Heart right ventricle (tissue), 16 donors: ENCODE measurements at regions of chr22 and their contacts with region 1.

Region 1: GRCh38 chr22:39532215-39533071 is at the start of gene RPS19BP1:
- DNase-seq: peak; percentile 98 to 99
- ATAC-seq: peak; percentile 85 to 93 (median 90)
- H3K4me3 ChIP-seq: peak within 1 kb of the TSS; percentile 67 to 88 (median 74)
- H3K27ac ChIP-seq: peak within 1 kb of the TSS; percentile 88 to 98 (median 92)
- H3K4me1 ChIP-seq: peaks cover 25 to 62% (median 47%) of the 10 kb centered on the region in 9 donors
- H3K27me3 ChIP-seq: no peaks in the 10 kb centered on the region
- CTCF ChIP-seq: no peak
- total RNA-seq, gene RPS19BP1: 31.3 to 64.0 (median 37.2) TPM

Region 2: DNA sequence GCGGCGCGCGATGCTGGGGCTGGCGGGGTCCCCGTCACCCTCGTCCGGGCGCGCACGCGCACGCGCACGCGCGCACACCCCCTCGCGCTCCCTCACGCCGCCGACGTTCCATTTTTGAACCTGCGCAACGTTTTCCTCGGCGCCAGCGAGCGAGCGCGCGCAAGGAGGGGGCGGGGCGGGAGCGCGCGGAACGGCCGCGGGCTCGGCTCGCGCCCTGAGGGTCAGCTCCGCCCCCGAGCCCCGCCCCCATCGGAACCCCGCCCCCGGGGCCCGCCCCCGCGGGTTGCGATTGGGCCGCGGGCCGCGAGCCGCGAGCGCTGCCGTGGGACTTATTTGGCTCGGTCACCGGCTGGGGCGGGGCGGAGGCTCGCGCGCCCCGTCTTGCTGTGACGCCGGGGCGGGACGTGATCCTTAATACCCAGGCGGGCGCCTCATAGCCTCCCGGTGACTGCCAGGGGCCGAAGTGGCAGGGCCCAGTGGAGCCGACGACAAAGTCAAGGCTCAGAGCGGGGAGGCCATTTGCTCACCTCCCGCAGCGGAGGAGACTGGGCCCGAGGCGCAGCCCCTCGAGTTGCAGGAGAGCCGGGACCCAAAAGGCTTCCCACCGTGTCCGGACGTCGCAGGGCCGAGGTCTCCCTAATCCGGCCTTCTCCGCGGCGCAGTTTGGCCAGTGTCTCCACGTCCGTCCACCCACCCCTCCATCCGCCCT is 379.8 kb before region 1 on chr22 and contains the start of gene CBX7:
- intact Hi-C with region 1: loop called in 1 of 10 experiments (anchors 5 kb)
- DNase-seq: peak; percentile 95 to 96
- ATAC-seq: peak; percentile 90 to 93 (median 92)
- H3K4me3 ChIP-seq: peak within 1 kb of the TSS; percentile 87 to 99 (median 94)
- H3K27ac ChIP-seq: peak within 1 kb of the TSS; percentile 83 to 97 (median 95)
- H3K4me1 ChIP-seq: peaks cover 7 to 56% (median 47%) of the 10 kb centered on the region in 9 donors
- H3K27me3 ChIP-seq: peaks cover 0 to 18% (median 0%) of the 10 kb centered on the region in 7 donors
- CTCF ChIP-seq: no peak
- total RNA-seq, gene CBX7: 48.8 to 85.8 (median 76.3) TPM

Region 3: DNA sequence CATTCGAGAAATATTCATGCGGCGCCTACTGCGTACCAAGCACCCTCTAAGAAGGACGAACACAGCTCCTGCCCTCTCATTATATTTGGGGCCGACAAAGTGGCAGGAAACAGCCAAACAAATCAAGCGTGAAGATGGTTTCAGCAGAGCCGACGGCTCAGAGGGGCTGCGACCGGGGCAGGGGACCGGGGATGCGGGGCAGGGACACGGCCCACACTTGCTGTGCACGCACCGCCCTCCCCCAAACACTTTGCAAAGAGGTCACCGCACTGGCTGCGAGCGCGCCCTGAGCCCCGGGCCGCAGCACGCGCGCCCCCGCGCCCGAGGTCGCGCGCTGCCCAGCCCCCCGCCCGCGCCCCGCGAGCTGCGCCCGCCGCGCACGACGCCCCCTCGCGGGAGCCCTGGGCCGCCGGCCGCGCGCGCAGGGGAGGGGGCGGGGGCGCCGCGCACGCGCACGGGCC is 182.9 kb before region 1 on chr22:
- intact Hi-C with region 1: loop called in 5 of 10 experiments (anchors 5 to 10 kb)
- DNase-seq: peak; percentile 30 to 53
- ATAC-seq: peak; percentile 54 to 79 (median 73)
- H3K4me3 ChIP-seq: peak overlapping the region; percentile 60 to 96 (median 72)
- H3K27ac ChIP-seq: peak overlapping the region in 8 of 10 donors; percentile 56 to 88 (median 74)
- H3K4me1 ChIP-seq: peaks cover 0 to 32% (median 19%) of the 10 kb centered on the region in 9 donors
- H3K27me3 ChIP-seq: peaks cover 0 to 14% (median 0%) of the 10 kb centered on the region in 7 donors
- CTCF ChIP-seq: no peak

Region 4: DNA sequence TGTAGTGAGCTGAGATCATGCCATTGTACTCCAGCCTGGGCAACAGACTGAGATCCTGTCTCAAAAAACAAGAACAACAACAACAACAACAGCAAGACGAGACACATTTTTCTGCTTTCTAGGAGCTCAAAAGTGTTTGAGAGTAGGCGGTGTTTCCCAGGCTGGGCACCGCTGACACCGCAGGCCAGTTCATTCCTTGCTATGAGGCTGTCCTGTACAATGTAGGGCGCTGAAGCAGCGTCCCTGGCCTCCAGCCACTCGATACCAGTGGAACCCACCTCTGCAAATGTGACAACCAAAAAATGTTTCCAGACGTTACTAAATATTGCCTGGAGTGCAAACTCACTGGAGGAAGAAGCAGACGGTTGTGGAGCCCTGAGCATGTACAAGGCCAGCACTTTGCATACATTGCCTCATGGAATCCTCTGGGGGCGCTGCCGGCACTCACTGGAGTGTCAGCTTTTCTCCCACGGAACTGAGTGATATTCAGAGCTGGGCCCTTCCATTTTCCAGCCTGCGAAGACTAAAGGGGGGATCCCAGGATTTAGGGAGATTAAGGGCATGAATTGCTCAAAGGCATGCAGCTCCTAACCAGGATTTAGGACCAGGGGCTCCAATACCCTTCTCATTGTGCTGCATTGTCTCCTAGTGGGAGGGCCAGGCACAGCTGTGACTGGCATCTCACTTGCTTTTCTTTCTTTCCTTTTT is 36.2 kb before region 1 on chr22:
- intact Hi-C with region 1: loop called in 8 of 10 experiments (anchors 1 to 5 kb)
- DNase-seq: peak; percentile 71 to 86
- ATAC-seq: peak; percentile 46 to 80 (median 68)
- H3K4me3 ChIP-seq: no peak overlapping the region
- H3K27ac ChIP-seq: peak overlapping the region in 7 of 10 donors; percentile 12 to 71 (median 38)
- H3K4me1 ChIP-seq: peaks cover 11 to 58% (median 32%) of the 10 kb centered on the region in 9 donors
- H3K27me3 ChIP-seq: no peaks in the 10 kb centered on the region
- CTCF ChIP-seq: peak; percentile 65 to 87 (median 79)

Region 5: DNA sequence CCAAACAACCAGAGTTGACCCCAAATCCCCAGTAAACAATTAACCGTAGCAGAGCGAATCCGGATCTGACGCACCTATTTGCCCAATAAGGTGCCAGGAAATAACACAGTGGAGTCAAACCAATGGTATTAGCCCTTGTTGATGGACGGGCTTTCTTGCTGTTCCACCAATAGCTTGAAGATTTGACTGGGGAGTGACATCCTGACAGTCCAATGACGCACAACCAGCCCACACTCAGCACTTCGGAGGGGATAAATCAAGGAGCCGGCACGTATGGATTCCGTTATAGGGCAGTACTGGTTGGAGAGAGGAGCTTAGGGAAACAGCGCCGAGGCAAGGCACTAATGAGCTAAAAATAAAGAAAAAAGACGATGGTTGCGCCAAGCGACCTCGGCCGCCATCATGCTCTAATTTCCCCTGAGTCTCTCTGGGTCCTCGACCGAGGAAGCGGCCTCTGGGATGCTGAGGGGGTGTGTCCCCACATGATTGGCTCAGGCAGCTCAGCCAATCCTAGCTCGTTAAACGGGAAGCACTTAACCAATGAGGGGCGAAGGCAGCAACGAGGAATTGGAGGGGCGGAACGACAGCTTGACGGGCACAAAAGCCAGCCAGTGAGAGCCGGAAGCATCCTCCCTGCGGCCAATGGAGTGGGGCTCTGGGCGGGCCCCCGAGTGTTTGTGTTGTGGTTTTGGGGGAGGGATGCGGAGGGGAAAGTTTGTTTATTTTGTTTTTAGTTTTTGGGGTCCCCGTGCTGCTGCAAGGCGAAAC is 511.8 kb after region 1 on chr22:
- intact Hi-C with region 1: loop called in 3 of 10 experiments (anchors 5 kb)
- DNase-seq: peak; percentile 97 to 99
- ATAC-seq: peak; percentile 94 to 98 (median 97)
- H3K4me3 ChIP-seq: peak overlapping the region; percentile 40 to 82 (median 67)
- H3K27ac ChIP-seq: peak overlapping the region; percentile 77 to 98 (median 92)
- H3K4me1 ChIP-seq: peaks cover 7 to 63% (median 42%) of the 10 kb centered on the region in 9 donors
- H3K27me3 ChIP-seq: peaks cover 0 to 3% (median 0%) of the 10 kb centered on the region in 7 donors
- CTCF ChIP-seq: no peak

Region 6: DNA sequence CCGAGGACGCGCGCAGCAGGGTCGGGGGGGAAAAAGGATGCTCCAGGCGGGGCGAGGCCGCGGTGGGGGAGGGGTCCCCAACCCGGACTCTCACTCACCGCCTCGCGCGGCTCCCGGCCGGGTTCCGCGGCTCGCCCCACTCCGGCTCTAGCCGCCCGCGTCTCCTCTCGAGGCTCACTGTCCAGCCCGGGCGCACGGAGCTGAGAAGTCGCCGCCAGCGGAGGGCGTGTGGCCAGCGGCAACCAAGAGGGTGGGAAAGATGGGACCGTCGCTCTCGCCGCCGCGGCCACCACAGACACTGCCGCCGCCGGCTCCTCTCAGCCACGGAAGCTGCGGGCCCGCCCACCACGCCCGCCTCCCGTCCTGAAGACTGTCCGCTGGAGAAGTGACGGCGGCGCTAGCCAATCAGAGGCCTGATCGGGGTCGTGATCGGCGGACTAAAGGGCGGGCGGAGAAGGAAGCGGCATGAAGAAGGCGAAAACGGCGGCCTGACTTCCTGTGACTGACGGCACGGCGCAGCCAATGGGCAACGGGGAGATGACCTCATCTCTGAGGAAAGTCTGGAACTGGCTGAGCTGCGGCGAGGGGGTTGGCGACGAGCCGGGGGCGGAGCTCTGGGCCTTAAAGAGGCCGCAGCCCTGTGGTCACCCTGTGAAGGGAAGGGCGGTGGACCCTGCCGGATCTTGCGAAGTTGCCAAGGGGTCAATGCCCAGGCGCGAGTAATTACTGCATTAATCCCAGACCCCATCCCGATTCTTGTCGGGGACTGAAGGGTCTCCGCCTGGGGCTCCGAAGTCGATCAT is 1104.1 kb after region 1 on chr22 and contains the start of gene MRTFA:
- intact Hi-C with region 1: loop called in 1 of 10 experiments (anchors 10 kb)
- DNase-seq: peak; percentile 100
- ATAC-seq: peak; percentile 96 to 98 (median 98)
- H3K4me3 ChIP-seq: peak within 1 kb of the TSS; percentile 65 to 99 (median 93)
- H3K27ac ChIP-seq: peak within 1 kb of the TSS; percentile 83 to 94 (median 92)
- H3K4me1 ChIP-seq: peaks cover 3 to 52% (median 33%) of the 10 kb centered on the region in 9 donors
- H3K27me3 ChIP-seq: no peaks in the 10 kb centered on the region
- CTCF ChIP-seq: peak in 1 of 9 donors; percentile 19
- total RNA-seq, gene MRTFA: 13.2 to 30.9 (median 18.5) TPM